Natural killer cell (primary cell): ENCODE measurements at regions of chr21 and their contacts with region 1.

Region 1: DNA sequence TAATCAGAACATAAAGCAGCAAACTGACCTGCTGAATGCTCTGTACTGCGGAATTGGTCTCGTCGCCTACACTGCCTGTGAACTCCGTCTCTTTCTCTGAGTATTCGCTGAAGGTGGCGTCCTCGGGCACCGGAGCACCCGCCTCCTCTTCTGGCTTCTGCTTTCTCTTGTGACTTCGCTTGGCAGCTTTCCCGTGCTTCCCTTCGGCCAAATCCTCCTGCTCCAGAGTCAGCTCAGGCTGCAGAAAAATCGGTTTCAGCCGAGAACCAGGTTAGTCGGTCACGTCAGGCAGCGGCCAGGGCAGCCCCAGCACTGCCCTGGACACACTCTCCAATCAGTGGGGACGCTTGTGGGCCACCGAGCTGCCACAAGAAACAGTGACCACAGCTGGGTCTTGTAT is 35.8 kb upstream of the RIPK4 start:
- DNase-seq: no peak
- ATAC-seq: no peak
- H3K4me3 ChIP-seq: no peak overlapping the region
- H3K4me3 Mint-ChIP-seq: no peak overlapping the region
- H3K27ac ChIP-seq: no peak overlapping the region
- H3K27ac Mint-ChIP-seq: no peak overlapping the region
- H3K4me1 ChIP-seq: no peaks in the 10 kb centered on the region
- H3K4me1 Mint-ChIP-seq: peaks cover 0 to 19% of the 10 kb centered on the region in 2 donors
- H3K27me3 ChIP-seq: no peaks in the 10 kb centered on the region
- H3K27me3 Mint-ChIP-seq: no peaks in the 10 kb centered on the region
- CTCF ChIP-seq: no peak

Region 2: GRCh38 chr21:41745971-41746743 is 56.5 kb before region 1 on chr21:
- intact Hi-C with region 1: loop called (anchors 10 kb)
- DNase-seq: no peak
- ATAC-seq: no peak
- H3K4me3 ChIP-seq: no peak overlapping the region
- H3K4me3 Mint-ChIP-seq: no peak overlapping the region
- H3K27ac ChIP-seq: no peak overlapping the region
- H3K27ac Mint-ChIP-seq: no peak overlapping the region
- H3K4me1 ChIP-seq: no peaks in the 10 kb centered on the region
- H3K4me1 Mint-ChIP-seq: no peaks in the 10 kb centered on the region
- H3K27me3 ChIP-seq: no peaks in the 10 kb centered on the region
- H3K27me3 Mint-ChIP-seq: no peaks in the 10 kb centered on the region
- CTCF ChIP-seq: no peak

Region 3: DNA sequence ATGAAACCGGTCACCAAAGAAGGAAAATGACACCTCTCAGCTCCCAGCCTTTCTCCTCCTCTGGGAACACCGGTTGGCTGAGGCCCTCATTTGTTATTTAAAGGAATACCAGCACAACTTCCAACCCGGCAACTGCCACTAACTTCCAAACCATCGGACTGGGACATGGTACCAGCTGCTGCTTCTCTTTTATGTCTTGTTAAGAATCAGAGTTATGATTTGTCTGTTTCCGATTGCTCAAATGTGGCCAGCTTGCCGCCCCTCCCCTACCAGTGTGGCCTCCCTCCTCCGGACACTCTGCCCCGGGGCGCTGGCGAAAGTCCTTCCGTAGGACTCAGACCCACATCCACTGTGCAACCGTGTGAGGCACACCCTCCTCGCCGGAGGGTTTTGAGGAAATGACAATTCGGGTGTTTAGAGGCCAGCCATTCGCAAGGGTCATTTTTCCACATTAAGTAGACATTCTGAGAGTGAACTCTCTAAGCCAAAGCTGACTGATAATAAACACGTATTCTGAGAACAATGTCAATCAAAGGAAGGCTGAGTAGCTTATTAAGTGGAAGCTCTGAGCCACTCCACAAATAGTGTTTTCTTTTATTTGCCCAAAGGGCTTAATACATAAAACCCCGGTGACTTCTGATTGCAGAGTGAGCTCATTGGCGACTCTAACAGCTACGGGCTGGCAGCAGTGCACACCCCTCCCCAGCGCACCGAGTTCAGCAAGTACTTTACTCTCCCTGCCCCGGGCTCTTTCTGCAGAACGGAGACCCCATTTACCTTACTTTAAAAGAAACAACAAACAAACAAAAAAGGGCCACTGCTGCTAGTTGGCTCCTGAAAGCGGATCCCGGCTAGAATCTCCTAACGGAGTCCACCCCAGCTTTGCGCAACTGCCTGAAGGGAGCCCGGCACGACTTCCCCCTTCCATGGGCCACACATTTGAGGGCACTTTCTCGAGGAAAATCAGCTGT is 41.2 kb before region 1 on chr21:
- intact Hi-C with region 1: no loop called
- DNase-seq: no peak
- ATAC-seq: peak in 2 of 3 donors; percentile 45 to 54
- H3K4me3 ChIP-seq: no peak overlapping the region
- H3K4me3 Mint-ChIP-seq: peak overlapping the region; percentile 6
- H3K27ac ChIP-seq: no peak overlapping the region
- H3K27ac Mint-ChIP-seq: no peak overlapping the region
- H3K4me1 ChIP-seq: peaks cover 13% of the 10 kb centered on the region
- H3K4me1 Mint-ChIP-seq: peaks cover 7 to 20% of the 10 kb centered on the region in 2 donors
- H3K27me3 ChIP-seq: peaks cover 27% of the 10 kb centered on the region
- H3K27me3 Mint-ChIP-seq: peaks cover 51 to 62% of the 10 kb centered on the region in 2 donors
- CTCF ChIP-seq: no peak

Region 4: DNA sequence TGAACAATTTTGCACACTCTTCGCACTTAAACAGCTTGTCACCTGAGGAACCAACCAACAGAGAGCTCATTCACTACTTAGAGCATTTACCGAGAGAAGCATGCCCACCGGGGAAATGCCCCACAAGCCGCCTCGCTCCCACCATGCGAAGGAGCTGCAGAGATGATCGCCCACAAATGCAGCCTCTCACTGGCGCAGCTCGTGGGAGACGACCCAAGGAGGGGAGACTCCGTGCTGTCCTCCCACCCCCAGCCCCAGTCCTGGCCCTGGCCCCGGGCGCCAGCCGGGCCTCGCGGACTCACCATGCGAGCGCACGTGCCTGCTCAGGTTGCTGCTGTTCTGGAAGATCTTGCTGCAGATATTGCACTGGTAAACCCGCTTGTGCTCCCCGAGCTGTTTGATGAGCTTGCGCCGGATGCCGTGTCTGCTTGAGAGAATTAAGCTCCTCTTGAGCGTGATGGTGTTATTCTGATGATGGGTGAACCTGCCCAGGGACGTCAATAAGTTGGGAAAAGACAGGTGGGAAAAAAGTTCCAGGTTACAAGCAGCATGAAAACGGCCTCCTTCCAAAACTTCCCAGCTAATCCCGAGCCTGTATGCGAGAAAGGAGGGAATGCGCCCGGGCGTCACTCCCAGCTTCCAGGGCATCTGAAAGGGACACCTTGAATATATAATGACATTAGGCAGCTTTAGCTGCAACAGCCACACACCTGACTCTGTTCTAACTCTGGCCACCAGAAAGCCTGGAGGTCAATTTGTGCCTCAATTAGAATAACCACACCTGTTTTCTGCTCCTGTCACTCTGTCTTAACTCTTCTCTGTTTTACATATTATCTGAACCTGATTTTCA is 33.7 kb after region 1 on chr21:
- intact Hi-C with region 1: no loop called
- DNase-seq: no peak
- ATAC-seq: no peak
- H3K4me3 ChIP-seq: no peak overlapping the region
- H3K4me3 Mint-ChIP-seq: no peak overlapping the region
- H3K27ac ChIP-seq: no peak overlapping the region
- H3K27ac Mint-ChIP-seq: no peak overlapping the region
- H3K4me1 ChIP-seq: no peaks in the 10 kb centered on the region
- H3K4me1 Mint-ChIP-seq: no peaks in the 10 kb centered on the region
- H3K27me3 ChIP-seq: no peaks in the 10 kb centered on the region
- H3K27me3 Mint-ChIP-seq: no peaks in the 10 kb centered on the region
- CTCF ChIP-seq: no peak